ENCODE measurements at regions of chr1 and their contacts with region 1.

Region 1: DNA sequence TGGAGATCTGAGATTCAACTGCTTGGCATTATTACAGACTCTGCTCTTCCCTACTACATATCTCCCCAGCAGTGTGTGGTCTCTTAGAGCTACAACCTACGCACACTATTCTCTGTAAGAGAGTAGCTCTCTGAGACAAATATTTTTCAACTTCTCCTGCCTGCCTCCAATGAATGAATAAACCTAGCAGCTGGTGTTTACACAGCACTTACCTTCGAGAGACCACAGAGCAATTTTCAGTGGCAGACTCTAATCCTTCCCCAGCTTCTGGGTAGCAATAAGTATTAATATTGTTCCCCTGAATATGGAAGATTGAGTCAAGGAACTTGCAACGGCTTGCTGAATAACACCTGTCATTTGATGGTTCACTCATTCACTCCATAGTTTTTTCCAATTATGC is 350.9 kb upstream of the SPAG17 start:
- DNase-seq: no peak
- ATAC-seq: no peak
- H3K4me3 ChIP-seq: no peak overlapping the region
- H3K4me3 Mint-ChIP-seq: no peak overlapping the region
- H3K27ac ChIP-seq: no peak overlapping the region
- H3K27ac Mint-ChIP-seq: no peak overlapping the region
- H3K4me1 ChIP-seq: no peaks in the 10 kb centered on the region
- H3K4me1 Mint-ChIP-seq: no peaks in the 10 kb centered on the region
- H3K27me3 ChIP-seq: no peaks in the 10 kb centered on the region
- H3K27me3 Mint-ChIP-seq: no peaks in the 10 kb centered on the region

Region 2: DNA sequence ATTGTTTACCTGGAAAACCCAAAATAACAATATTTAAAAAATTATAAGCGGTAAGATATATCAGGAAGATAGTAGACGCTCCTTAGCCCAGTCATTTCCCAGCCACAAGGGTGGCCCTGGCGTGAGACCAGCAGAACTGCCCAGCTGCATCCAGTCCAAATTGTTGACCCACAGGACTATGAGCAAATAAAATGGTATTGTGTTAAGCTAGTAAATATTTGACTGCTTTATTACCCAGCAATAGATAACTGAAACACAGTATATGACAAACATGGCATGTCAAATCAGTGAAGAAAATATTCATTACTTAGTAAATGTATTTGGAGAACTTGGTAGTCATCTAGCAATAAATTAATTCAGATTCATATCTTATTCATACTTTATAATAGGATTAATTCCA is 56.5 kb before region 1 on chr1:
- CTCF ChIA-PET with region 1: no interaction called
- POLR2A ChIA-PET with region 1: no interaction called
- intact Hi-C with region 1: loop called in 1 of 2 experiments (anchors 2 kb)
- DNase-seq: no peak
- ATAC-seq: no peak
- H3K4me3 ChIP-seq: no peak overlapping the region
- H3K4me3 Mint-ChIP-seq: no peak overlapping the region
- H3K27ac ChIP-seq: no peak overlapping the region
- H3K27ac Mint-ChIP-seq: no peak overlapping the region
- H3K4me1 ChIP-seq: no peaks in the 10 kb centered on the region
- H3K4me1 Mint-ChIP-seq: no peaks in the 10 kb centered on the region
- H3K27me3 ChIP-seq: no peaks in the 10 kb centered on the region
- H3K27me3 Mint-ChIP-seq: no peaks in the 10 kb centered on the region

Measured in naive thymus-derived CD4-positive, alpha-beta T cell (primary cell).